Colonic mucosa (tissue), 4 donors: ENCODE measurements at regions of chr3 and their contacts with region 1.

Region 1: DNA sequence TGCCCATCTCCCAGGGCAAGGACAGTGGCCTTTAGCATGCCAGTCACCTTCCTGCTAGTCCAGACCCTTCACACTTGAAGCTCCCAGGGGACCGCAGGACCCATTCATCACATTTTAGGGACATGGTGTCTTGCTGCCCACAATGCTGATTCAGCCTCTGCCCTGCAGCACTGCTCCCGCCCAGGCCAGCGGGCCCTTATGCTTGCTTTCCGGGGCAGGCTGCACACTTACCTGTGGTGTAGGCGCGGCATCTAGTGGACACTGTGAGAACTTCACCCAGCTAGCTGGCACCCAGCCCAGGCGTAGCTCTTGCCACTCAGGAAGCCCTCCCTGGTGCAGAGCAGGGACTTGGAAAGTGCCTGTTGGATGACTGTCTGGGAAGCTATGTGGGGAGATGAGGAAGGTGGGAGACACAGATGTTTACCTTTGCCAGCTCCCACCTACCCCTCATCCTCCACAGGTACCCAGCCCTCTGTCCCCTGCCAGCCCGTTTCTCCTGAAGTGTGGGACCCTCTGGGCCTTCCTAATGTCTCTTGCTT is 26.2 kb upstream of the NR2C2 start:
- DNase-seq: peak; percentile 87
- H3K4me3 ChIP-seq: no peak overlapping the region
- H3K27ac ChIP-seq: no peak overlapping the region
- H3K4me1 ChIP-seq: no peaks in the 10 kb centered on the region
- H3K27me3 ChIP-seq: no peaks in the 10 kb centered on the region
- CTCF ChIP-seq: peak; percentile 100

Region 2: GRCh38 chr3:14616606-14617507 is 304.3 kb before region 1 on chr3:
- intact Hi-C with region 1: no loop called
- DNase-seq: no peak
- H3K4me3 ChIP-seq: no peak overlapping the region
- H3K27ac ChIP-seq: no peak overlapping the region
- H3K4me1 ChIP-seq: no peaks in the 10 kb centered on the region
- H3K27me3 ChIP-seq: no peaks in the 10 kb centered on the region
- CTCF ChIP-seq: no peak

Region 3: DNA sequence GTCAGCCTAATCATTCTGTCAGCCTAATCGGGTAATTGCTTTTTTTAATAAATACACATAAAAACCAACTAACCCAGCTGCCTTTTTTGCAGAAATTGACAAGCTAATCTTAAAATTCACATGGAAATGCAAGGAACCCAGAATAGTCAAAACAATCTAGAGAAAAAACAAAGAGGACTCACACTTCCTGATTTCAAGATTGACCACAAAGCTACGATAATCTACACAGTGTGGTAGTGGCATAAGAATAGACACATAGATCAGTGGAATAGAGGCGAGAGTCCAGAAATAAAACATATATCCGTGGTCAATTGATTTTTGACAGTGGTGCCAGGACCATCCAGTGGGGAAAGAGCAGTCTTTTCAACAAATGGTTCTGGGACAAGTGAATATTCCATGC is 248.6 kb before region 1 on chr3:
- intact Hi-C with region 1: loop called (anchors 5 kb)
- DNase-seq: no peak
- H3K4me3 ChIP-seq: no peak overlapping the region
- H3K27ac ChIP-seq: no peak overlapping the region
- H3K4me1 ChIP-seq: no peaks in the 10 kb centered on the region
- H3K27me3 ChIP-seq: no peaks in the 10 kb centered on the region
- CTCF ChIP-seq: no peak

Region 4: GRCh38 chr3:14791343-14791945 is 129.7 kb before region 1 on chr3:
- intact Hi-C with region 1: loop called (anchors 2 kb)
- DNase-seq: peak; percentile 76
- H3K4me3 ChIP-seq: no peak overlapping the region
- H3K27ac ChIP-seq: no peak overlapping the region
- H3K4me1 ChIP-seq: no peaks in the 10 kb centered on the region
- H3K27me3 ChIP-seq: no peaks in the 10 kb centered on the region
- CTCF ChIP-seq: peak; percentile 53

Region 5: GRCh38 chr3:15042936-15043335 is 121.8 kb after region 1 on chr3:
- intact Hi-C with region 1: loop called (anchors 10 kb)
- DNase-seq: no peak
- H3K4me3 ChIP-seq: no peak overlapping the region
- H3K27ac ChIP-seq: no peak overlapping the region
- H3K4me1 ChIP-seq: no peaks in the 10 kb centered on the region
- H3K27me3 ChIP-seq: no peaks in the 10 kb centered on the region
- CTCF ChIP-seq: no peak